ENCODE measurements at regions of chr17 and their contacts with region 1.

Region 1: DNA sequence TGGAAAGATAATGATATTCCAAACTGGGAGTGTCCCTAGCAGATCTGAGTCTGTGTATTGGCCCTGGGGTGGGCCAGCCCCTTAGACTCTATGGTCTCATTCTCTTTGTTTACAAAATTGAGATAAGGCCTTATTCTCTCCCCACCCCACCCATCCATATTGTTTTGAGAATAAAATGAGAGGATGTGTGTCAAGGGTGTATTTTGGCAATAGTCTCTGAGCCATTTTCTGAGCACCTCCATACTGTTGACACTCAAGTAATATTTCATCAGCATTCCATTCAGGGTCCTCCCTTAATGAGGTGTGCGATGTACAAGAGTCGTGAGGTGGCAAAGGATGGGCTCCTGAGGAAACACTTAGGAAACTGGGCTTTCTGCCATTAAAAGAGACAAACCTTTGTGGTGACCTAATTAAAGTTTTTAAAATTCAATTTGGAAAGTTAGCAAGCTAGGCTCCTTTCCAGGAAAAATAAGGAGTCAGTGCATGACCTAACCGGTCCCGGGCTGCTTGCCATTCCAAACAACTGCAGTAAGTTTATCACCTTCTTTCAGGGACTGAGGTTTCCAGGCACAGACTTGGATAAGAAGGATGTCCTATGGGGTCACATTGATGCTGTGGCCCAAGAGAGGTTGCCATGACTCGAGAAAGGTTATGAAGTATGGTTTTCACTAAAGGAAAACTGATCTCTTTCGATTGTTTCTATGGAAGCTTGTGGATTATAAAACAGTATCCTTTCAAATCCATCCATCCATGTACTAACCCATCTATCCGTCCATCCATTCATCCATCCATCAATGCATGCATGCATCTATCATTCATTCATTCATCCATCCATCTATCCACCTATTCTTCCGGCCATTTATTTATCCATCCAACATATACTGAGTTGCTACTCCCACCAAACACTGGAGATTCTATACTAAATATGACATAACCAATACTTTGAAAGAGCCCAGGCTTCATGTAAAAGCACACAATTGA is 443.3 kb downstream of the UTP18 start:
- DNase-seq: no peak
- ATAC-seq: no peak

Region 2: DNA sequence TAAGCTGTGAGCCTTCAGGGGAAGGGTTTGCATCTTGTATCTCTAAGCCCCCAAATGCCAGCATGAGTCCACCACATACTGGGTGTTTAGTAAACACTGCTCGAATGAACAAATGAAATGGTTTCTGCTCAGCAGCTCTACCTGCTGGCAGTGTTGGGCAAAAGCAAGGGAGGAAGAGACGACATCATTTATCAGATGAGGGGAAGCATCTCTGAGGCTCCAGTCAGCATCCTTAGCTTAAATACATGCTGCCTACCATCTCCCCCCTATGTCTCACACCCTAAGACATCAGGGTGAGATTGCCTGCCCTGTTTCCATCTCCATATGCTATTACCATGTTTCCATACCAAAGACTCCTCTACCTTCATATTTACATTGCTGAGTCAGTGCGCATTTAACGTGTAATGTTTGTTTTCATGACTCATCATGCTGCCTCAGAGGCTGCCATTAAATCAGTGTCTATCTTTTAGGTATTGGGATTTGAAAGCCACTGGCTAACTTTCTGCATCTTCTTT is 63.5 kb before region 1 on chr17:
- intact Hi-C with region 1: loop called in 1 of 2 experiments (anchors 10 kb)
- DNase-seq: no peak
- ATAC-seq: no peak

Region 3: GRCh38 chr17:51805765-51806164 is 102.1 kb after region 1 on chr17:
- intact Hi-C with region 1: no loop called
- DNase-seq: peak in 1 of 2 donors; percentile 19
- ATAC-seq: peak; percentile 90

Region 4: DNA sequence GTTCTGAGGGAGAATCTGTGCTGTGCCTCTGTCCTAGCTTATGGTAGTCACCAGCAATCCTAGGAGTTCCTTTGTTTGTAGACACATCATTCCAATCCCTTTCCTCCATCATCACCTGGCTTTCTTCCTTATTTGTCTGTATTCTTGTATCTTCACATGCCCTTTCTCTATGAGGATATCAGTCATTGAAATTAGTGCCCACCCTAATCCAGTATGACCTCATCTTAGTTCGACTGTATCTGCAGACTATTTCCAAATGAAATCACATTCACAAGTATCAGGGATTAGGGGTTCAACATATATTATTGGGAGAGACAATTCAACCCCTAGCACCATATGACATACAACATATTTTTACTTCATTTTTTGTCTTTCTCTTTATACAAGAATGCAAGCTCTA is 181.1 kb after region 1 on chr17:
- intact Hi-C with region 1: loop called in 1 of 2 experiments (anchors 5 kb)
- DNase-seq: no peak
- ATAC-seq: no peak